Common myeloid progenitor, CD34-positive (primary cell): ENCODE measurements at regions of chr9 and their contacts with region 1.

Region 1: DNA sequence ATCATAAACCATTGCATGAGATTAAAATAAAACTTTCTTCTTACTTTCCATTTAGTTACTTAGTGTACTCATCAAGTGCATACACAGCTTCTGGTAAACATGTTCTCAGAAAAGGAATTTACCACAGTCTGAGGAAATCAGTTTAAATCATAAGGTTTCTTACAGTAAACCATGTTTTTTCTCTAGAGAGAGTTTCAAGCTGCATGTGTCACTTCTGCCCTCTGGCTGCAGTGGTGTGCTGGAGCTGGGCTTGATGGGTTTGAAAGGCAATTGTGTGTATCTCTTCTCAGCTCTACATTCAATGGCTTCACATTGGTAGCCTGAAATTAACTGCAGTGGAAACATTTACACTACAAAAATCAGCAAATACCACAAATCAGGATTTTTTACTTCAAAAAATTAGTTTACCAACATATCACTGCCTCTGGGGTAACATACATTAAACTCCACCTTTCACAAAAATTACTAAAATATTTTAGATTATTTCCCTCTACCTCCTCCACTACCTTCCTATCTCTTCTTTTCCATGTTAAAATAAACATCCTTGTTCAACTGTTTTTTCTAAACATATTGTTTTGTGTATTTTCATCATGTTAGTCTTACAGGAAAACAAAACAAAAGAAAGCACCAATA is 414.3 kb downstream of the ANXA1 start:
- DNase-seq: peak; percentile 0 to 27 (median 9)
- H3K4me3 ChIP-seq: no peak overlapping the region
- H3K27ac ChIP-seq: no peak overlapping the region
- H3K4me1 ChIP-seq: no peaks in the 10 kb centered on the region
- H3K27me3 ChIP-seq: no peaks in the 10 kb centered on the region

Region 2: DNA sequence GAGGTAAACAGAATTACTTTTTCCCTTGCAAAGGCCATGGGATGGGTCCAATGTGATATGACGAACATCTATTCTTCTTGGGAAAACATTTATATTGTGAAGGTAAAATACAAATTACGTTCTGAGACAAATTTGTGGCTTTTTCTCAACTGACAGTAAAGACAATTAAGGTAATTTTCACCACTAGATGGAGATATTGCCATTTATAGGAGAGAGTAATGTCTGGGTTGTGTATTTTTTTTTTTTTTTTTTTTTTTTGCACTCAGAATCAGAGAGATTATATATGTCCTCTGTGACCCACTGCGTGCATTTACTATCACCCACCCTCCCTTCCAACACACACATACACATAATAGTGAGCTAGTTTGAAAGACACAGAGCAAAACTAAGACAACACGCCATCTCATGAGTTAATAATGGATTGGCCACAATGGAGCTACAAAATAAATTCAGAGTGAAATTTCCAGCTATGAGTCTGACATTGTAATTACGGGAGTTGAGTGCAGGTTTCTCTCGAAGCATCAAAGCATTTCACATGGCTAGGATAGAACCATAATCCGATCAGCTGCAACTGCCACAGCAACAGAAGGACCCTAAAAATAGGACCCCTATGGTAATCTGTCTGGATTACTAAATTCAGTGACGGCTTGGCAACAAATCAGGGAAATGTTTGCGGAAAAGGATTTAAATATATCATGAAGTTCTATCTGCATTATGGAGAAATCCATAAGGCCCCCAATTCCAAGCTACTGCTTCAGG is 365.1 kb before region 1 on chr9:
- CTCF ChIA-PET with region 1: interaction called, 10 read pairs
- POLR2A ChIA-PET with region 1: no interaction called
- DNase-seq: peak; percentile 30 to 61 (median 58)
- H3K4me3 ChIP-seq: no peak overlapping the region
- H3K27ac ChIP-seq: no peak overlapping the region
- H3K4me1 ChIP-seq: peaks cover 0 to 4% (median 0%) of the 10 kb centered on the region in 4 experiments
- H3K27me3 ChIP-seq: no peaks in the 10 kb centered on the region

Region 3: DNA sequence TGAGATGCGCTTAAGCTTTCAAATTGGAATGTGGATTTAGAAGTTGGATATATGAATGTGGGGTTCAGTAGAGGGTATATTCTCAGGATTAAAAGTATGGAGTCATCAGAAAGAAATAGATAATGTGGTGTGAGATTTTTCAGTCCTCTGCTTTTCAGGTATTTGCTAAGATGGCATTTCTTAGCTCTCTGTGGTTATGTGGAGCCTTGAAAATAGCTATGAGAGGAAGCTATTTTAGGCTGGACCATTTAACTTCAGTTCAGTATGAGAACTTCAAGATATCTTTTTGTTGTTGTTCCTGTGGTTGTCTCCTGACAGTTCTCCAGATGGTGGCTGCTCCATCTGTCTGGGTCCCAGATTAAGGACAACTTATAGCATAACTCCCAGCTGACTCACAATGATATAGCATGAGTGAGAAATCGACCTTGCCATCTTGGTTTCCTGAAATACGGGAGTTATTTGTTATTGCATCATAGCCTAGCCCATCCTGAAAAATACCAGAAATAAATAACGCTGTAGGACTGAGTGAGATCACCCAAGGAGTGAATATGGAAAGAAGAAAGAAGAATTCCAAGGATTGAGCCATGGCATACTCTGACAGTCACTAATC is 47.2 kb after region 1 on chr9:
- CTCF ChIA-PET with region 1: no interaction called
- POLR2A ChIA-PET with region 1: no interaction called
- DNase-seq: no peak
- H3K4me3 ChIP-seq: no peak overlapping the region
- H3K27ac ChIP-seq: no peak overlapping the region
- H3K4me1 ChIP-seq: peaks cover 0 to 10% (median 0%) of the 10 kb centered on the region in 4 experiments
- H3K27me3 ChIP-seq: no peaks in the 10 kb centered on the region